Heart left ventricle (tissue), 16 donors: ENCODE measurements at regions of chr22 and their contacts with region 1.

Region 1: DNA sequence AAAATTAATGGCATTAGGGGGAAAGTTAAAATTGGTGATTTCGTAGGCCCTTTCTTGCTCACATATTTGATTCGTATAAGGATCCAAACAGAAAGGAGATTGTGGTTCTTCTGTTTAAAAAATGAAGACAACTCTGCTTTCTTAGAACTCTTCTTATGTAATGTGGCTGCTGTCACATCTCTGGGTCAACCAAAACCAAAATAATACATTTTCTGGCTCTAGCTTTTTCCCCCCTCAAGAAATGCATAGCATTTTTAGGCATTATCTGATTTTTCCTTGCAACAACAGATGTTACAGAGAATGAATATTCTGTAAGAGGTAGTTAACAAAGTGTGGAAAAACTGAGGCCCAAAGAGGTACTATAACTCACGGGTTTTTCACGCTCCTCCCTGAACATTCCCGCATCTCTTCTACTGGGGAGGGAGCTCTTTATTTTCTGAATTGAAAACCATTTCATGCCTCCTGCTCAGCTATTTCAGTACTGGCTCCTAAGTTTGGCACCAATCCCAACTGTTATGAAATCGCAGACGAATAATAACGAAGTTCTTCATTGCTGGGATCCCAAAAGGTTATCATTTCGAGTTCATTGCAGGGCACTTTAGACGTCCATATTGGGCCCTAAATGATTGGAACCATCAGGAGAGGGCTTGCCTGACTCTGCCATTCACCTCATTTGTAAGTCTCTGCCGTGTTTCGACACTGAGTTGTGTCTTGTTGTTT is 17.1 kb downstream of the GRAP2 start:
- DNase-seq: no peak
- ATAC-seq: no peak
- H3K4me3 ChIP-seq: no peak overlapping the region
- H3K27ac ChIP-seq: no peak overlapping the region
- H3K4me1 ChIP-seq: peaks cover 0 to 9% (median 0%) of the 10 kb centered on the region in 12 donors
- H3K27me3 ChIP-seq: peaks cover 0 to 35% (median 4%) of the 10 kb centered on the region in 9 donors
- CTCF ChIP-seq: no peak
- POLR2A ChIP-seq: no peak

Region 2: GRCh38 chr22:39868741-39869140 is 49.2 kb before region 1 on chr22:
- intact Hi-C with region 1: loop called in 1 of 10 experiments (anchors 5 kb)
- DNase-seq: no peak
- ATAC-seq: no peak
- H3K4me3 ChIP-seq: no peak overlapping the region
- H3K27ac ChIP-seq: no peak overlapping the region
- H3K4me1 ChIP-seq: no peaks in the 10 kb centered on the region
- H3K27me3 ChIP-seq: peaks cover 0 to 15% (median 4%) of the 10 kb centered on the region in 9 donors
- CTCF ChIP-seq: no peak
- POLR2A ChIP-seq: no peak